Caco-2 (cell line): ENCODE measurements at regions of chr3 and their contacts with region 1.

Region 1: DNA sequence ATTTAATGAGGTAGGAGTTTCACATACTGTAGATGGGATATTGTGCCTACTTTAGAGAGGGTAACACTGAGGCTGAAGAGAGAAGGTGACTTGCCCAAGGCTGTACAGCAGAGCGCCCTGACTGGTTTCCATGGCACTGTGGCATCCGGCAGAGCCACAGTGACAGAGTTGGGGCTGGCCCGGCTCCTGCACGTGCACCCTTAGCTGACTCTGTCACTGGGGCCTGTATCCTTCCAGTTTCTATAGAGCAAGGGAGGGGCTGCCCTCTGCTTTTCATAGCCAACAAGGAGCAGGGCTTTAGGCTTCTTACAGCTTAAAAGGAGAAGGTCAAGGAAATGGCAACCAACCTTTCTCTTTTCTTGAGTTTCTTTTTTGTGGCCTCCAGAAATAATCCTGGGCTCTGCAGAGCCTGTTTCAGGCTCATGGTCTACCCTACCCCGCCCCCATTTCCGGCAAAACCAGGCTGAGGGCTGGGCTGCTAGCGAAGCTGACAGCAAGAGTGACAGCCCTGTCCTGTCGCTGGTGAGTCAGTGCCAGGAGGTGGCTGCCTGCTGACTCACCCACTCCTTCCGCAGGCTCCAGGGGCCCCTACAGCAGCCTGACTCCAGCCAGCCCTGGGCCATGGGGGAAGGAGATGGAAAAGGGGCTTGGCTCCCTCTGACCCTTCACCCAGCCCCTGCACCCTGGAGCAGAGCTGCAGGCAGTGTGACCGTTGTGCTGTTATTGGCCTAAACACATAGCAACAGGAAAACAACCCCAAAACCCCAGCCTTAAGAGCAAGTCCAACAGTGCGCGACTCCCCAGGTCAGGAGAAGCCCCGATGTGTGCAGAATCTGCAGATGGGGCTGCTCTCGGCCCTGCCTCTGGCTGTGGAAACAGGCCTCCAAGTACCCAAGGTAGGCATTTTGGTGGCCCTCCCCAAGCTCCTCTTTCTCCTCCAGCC is 29.8 kb downstream of the SLC6A6 start:
- DNase-seq: peak; percentile 82 to 88
- H3K4me3 ChIP-seq: no peak overlapping the region
- H3K4me3 Mint-ChIP-seq: no peak overlapping the region
- H3K27ac Mint-ChIP-seq: peak overlapping the region; percentile 90
- H3K4me1 ChIP-seq: peaks cover 18% of the 10 kb centered on the region
- H3K4me1 Mint-ChIP-seq: peaks cover 19% of the 10 kb centered on the region
- H3K27me3 ChIP-seq: no peaks in the 10 kb centered on the region
- H3K27me3 Mint-ChIP-seq: no peaks in the 10 kb centered on the region
- CTCF ChIP-seq: no peak

Region 2: GRCh38 chr3:14461748-14462324 is 29.7 kb after region 1 on chr3:
- CTCF ChIA-PET with region 1: no interaction called
- POLR2A ChIA-PET with region 1: no interaction called
- intact Hi-C with region 1: loop called (anchors 2 kb)
- DNase-seq: peak; percentile 74 to 78
- H3K4me3 ChIP-seq: no peak overlapping the region
- H3K4me3 Mint-ChIP-seq: no peak overlapping the region
- H3K27ac Mint-ChIP-seq: peak overlapping the region; percentile 70
- H3K4me1 ChIP-seq: no peaks in the 10 kb centered on the region
- H3K4me1 Mint-ChIP-seq: no peaks in the 10 kb centered on the region
- H3K27me3 ChIP-seq: no peaks in the 10 kb centered on the region
- H3K27me3 Mint-ChIP-seq: no peaks in the 10 kb centered on the region
- CTCF ChIP-seq: peak; percentile 65 to 95